Right ventricle myocardium superior (tissue), 1 donor: ENCODE measurements at regions of chr4 and their contacts with region 1.

Region 1: DNA sequence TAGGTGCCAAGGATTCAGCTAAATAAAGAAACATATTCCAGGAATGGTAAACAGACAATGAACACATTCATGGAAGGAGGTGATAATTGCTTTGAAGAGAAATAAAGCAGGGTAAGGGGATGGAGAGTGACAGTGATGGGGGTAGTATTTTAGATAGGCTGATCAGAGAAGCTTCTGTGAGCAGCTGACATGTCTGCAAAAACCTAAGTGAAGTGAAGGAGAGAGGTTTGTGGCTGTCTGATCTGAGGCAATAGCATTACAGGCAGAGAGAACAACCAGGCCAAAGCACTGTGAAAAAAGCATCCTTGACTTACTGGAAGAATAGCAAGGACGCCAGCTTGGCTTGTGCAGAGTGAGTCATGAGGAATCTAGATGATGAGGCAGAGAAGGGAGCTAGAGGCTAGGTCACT is 271.9 kb upstream of the GATB start:
- DNase-seq: no peak
- ATAC-seq: peak; percentile 71

Region 2: DNA sequence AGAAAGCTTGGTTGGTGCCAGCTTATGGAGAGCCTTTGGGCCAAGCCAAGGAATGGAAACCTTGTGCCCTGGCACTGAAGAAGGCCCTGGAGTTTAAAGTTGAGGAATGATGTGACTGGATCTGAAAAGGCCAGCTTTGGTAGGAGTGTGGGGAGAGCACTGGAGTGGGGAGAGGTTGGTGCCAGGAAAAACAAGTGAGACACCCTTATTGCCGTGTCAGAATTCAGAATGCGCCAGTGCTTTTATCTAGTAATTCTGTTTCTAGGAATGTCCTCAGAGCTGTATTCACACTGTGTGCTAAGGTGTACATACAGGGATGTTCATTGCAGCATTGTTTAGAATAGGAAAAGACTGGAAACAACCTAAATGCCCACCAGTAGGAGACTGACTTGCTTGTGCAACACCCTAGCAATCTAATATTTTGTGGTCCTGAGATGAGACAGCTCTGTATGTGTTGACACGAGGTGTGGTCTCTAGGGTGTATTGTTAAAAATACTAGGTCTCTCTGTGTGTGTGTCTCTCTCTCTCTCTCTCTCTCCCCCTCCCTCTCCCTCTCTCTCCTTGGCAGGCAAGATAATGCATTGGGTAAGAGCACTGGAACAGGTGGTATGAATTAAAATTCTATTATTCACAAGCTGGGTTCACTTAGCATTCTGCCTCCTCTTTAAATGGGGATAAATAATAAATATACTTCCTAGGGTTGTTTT is 379.7 kb before region 1 on chr4:
- intact Hi-C with region 1: no loop called
- DNase-seq: no peak
- ATAC-seq: peak; percentile 52

Region 3: DNA sequence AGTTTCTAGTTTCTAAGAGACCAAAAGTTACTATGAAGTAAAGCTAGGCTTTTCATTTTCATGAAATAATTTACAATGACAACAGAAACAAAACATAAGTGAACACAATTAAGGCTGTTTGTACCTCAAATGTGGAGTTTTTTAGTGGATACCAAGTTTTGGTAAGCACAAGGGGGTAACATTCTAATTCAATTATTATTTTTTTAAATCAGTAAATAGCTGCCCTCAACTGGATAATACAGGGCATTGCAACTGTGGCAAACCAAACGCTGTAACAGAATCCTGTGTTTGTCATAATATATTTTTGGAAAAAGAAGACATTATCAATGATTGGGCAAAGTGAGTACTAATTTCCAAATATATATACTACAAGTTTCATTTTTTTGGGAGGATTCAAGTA is 352.8 kb after region 1 on chr4:
- intact Hi-C with region 1: loop called (anchors 10 kb)
- DNase-seq: no peak
- ATAC-seq: peak; percentile 30